Head of caudate nucleus (tissue), 42 donors: ENCODE measurements at regions of chr11 and their contacts with region 1.

Region 1: GRCh38 chr11:25981998-25982397 is 349.9 kb upstream of the ANO3 start:
- DNase-seq: peak in 12 of 42 donors; percentile 8 to 56 (median 22)

Region 2: DNA sequence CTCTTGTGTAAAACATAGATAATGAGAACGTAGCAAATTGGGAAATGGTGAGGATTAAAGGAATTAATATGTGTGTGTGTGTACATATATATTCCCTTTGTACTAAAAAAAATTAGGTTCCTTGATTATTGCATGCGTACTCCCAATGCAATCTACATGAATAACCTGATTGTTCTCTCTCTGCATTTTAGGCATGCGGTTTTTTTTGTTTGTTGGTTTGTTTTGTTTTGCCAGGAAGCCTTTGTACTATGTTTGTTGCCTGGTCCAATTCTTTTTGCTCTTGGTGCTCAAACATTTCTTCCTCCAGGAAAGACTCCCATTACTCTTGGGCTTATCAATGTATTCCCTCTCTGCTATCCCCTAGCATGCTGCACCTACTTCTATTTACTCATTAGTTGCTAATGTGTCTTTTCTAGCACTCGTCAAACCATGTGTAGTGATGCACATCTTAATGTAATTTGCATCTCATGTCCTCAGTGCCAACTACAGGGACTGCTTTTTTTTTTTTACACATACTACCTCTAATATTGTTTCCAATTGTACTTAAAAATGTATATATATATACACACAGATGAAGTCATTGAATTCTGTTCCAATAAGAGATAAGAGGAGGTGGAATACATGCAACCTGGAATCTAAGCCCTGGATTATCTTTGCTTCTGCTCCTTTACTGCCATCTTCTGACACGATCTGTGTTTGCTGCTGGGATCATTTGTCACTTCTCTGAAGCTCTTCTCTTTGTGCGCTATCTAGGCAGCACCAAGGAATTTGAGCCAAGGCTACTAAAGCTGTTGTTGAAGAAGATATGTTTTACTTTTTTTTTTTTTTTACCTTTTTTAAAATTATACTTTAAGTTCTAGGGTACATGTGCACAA is 152.7 kb after region 1 on chr11:
- intact Hi-C with region 1: loop called (anchors 10 kb)
- DNase-seq: peak in 18 of 42 donors; percentile 6 to 51 (median 28)

Region 3: GRCh38 chr11:26276798-26277424 is 294.9 kb after region 1 on chr11:
- intact Hi-C with region 1: loop called (anchors 5 kb)
- DNase-seq: peak in 40 of 42 donors; percentile 10 to 87 (median 65)